ENCODE measurements at regions of chr7 and their contacts with region 1.

Region 1: GRCh38 chr7:99997545-99998137 is 17.8 kb upstream of the ZKSCAN1 start:
- DNase-seq: peak; percentile 41 to 84 (median 82)
- ATAC-seq: peak; percentile 78 to 79
- H3K4me3 ChIP-seq: peak overlapping the region; percentile 54
- H3K27ac ChIP-seq: peak overlapping the region; percentile 48
- H3K4me1 ChIP-seq: no peaks in the 10 kb centered on the region
- H3K27me3 ChIP-seq: no peaks in the 10 kb centered on the region

Region 2: DNA sequence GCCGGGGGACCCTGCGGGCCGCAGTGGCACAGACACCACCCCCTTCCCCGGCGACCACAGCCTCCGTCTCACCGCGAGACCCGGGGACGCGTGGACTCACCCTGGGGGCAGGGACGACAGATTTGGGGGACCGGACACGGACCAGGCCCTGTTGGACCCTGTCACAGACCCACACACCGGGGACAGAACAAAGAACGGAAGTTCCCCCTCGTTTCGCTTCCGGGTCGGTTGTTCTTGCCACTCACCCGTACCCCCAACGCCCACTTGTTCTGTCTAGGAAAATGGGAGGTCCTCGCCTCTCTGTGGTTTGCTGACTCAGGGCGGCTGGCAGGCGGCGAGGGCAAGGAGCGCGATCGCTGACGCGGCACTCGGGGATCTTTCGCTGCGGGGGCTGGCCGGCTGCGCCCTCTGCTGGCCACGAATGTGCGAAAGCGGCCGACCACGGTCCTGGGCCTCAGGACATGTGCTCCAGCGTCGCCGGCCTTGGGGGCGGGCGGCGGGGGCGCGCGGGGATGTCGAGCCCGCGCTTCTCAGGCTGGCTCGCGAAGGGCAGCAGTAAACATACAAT is 84.0 kb after region 1 on chr7 and contains the start of gene ZNF3:
- intact Hi-C with region 1: loop called in 2 of 4 experiments (anchors 10 kb)
- DNase-seq: peak; percentile 98 to 99 (median 99)
- ATAC-seq: peak; percentile 95 to 97
- H3K4me3 ChIP-seq: peak within 1 kb of the TSS; percentile 76
- H3K27ac ChIP-seq: peak within 1 kb of the TSS; percentile 60
- H3K4me1 ChIP-seq: peaks cover 3% of the 10 kb centered on the region
- H3K27me3 ChIP-seq: no peaks in the 10 kb centered on the region
- total RNA-seq, gene ZNF3: 17.8 to 18.2 (median 18.0) TPM

Region 3: GRCh38 chr7:101017064-101017777 is 1019.6 kb after region 1 on chr7:
- intact Hi-C with region 1: no loop called
- DNase-seq: peak; percentile 86 to 90 (median 87)
- ATAC-seq: peak; percentile 92 to 98
- H3K4me3 ChIP-seq: peak overlapping the region; percentile 37
- H3K27ac ChIP-seq: peak overlapping the region; percentile 38
- H3K4me1 ChIP-seq: no peaks in the 10 kb centered on the region
- H3K27me3 ChIP-seq: no peaks in the 10 kb centered on the region